Body of pancreas (tissue), 4 donors: ENCODE measurements at regions of chr2 and their contacts with region 1.

Region 1: DNA sequence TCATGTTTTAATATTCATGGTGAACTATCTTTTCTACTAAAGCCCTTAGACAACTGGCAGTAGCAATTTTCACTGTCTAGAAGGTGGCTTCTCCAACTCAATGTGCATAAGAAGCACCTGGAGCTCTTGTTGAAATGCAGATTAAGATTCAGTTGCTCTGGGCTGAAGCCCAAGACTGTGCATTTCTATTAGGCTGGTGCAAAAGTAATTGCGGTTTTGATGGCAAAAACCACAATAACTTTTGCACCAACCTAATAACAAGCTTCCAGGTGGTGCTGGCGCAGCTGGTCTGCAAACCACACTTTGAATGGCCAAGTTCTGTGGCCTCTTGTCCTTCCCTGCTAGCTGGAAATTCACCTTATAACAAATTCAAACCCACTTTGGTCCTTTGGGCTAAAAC is 26.7 kb upstream of the VPS54 start:
- DNase-seq: no peak
- ATAC-seq: no peak
- H3K4me3 ChIP-seq: no peak overlapping the region
- H3K27ac ChIP-seq: no peak overlapping the region
- H3K4me1 ChIP-seq: peaks cover 6% of the 10 kb centered on the region
- H3K27me3 ChIP-seq: no peaks in the 10 kb centered on the region
- CTCF ChIP-seq: no peak
- POLR2A ChIP-seq: no peak

Region 2: DNA sequence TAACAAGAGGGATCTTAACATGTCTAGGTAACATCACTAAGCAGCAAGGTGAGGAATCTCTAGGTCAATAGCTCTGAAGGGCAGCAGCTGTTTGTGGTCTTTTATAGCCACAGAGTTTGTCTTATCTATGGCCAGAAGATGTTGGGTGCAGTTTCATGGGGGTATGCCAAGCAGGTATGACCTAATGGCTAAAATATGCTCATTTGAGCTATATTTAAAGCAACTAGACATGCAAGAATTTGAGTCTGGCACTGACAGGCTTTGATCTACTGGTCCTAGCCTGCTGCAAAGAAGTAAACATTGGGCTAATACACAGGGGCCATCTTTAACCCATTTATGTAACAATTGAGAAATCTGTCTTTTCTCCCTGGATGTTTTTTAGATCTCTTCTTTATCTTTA is 218.2 kb before region 1 on chr2:
- intact Hi-C with region 1: no loop called
- DNase-seq: no peak
- ATAC-seq: no peak
- H3K4me3 ChIP-seq: no peak overlapping the region
- H3K27ac ChIP-seq: no peak overlapping the region
- H3K4me1 ChIP-seq: peaks cover 6% of the 10 kb centered on the region
- H3K27me3 ChIP-seq: no peaks in the 10 kb centered on the region
- CTCF ChIP-seq: no peak
- POLR2A ChIP-seq: no peak

Region 3: GRCh38 chr2:64311948-64312621 is 266.1 kb after region 1 on chr2:
- intact Hi-C with region 1: loop called (anchors 5 kb)
- DNase-seq: peak; percentile 79 to 90 (median 87)
- ATAC-seq: peak; percentile 99
- H3K4me3 ChIP-seq: no peak overlapping the region
- H3K27ac ChIP-seq: peak overlapping the region; percentile 55 to 80 (median 74)
- H3K4me1 ChIP-seq: peaks cover 16% of the 10 kb centered on the region
- H3K27me3 ChIP-seq: no peaks in the 10 kb centered on the region
- CTCF ChIP-seq: peak in 6 of 7 experiments; percentile 33 to 77 (median 70)
- POLR2A ChIP-seq: peak in 1 of 3 donors; percentile 13

Region 4: GRCh38 chr2:64737547-64737946 is 691.6 kb after region 1 on chr2:
- intact Hi-C with region 1: no loop called
- DNase-seq: no peak
- ATAC-seq: no peak
- H3K4me3 ChIP-seq: no peak overlapping the region
- H3K27ac ChIP-seq: no peak overlapping the region
- H3K4me1 ChIP-seq: peaks cover under 1% of the 10 kb centered on the region
- H3K27me3 ChIP-seq: no peaks in the 10 kb centered on the region
- CTCF ChIP-seq: no peak
- POLR2A ChIP-seq: no peak